Calu3 (cell line): ENCODE measurements at regions of chr3 and their contacts with region 1.

Region 1: DNA sequence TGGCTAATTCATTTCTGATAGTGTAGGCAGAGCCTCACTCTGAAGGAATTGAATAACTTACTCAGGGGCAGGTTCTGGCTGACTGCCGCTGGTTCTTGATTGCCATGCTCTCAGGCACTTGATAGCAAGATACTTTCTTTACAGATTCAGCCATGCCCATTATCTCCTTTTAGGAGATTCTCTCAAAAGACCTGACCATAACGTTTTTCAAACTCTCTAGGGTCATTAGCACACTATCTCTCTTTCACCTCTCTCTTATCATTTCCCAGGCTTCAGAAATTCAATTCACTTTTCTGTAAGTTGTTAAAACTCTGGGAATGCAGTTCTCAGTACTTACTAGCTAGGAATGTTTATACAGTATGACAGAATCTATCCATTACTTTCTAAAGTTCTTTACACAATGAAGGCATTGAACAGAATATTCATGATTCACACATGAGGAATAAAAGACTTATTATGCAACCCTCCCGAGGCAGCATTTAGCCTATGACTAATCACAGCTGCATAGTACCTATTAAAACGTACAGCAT is 850.3 kb upstream of the CADM2 start:
- DNase-seq: peak; percentile 36
- H3K4me3 Mint-ChIP-seq: peak overlapping the region; percentile 18
- H3K27ac Mint-ChIP-seq: peak overlapping the region; percentile 85
- H3K4me1 Mint-ChIP-seq: peaks cover 46% of the 10 kb centered on the region
- H3K27me3 Mint-ChIP-seq: no peaks in the 10 kb centered on the region
- CTCF ChIP-seq: no peak

Region 2: GRCh38 chr3:84292128-84292527 is 183.6 kb after region 1 on chr3:
- CTCF ChIA-PET with region 1: interaction called, 10 read pairs
- intact Hi-C with region 1: no loop called
- DNase-seq: no peak
- H3K4me3 Mint-ChIP-seq: no peak overlapping the region
- H3K27ac Mint-ChIP-seq: no peak overlapping the region
- H3K4me1 Mint-ChIP-seq: peaks cover 15% of the 10 kb centered on the region
- H3K27me3 Mint-ChIP-seq: no peaks in the 10 kb centered on the region
- CTCF ChIP-seq: no peak